ENCODE measurements at regions of chr2 and their contacts with region 1.

Region 1: DNA sequence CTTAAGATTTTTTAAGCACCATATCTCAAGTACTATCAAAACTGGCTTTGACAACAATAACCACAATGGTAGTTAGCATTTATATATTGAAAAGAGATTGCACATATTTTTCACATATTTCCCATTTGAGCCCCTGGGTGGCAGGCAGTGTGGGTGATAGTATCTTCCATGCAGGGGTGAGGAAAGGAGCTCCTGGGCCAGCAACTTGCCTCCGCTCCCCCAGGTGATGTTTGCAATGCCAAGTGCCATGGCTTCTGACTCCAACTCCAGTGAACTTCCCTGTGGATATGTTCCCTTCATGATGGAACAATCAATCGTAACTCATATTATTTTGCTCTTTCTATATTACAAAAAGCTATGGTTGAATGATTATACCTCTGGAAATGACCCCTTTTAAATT is 377.7 kb downstream of the PLCL1 start:
- DNase-seq: no peak

Region 2: DNA sequence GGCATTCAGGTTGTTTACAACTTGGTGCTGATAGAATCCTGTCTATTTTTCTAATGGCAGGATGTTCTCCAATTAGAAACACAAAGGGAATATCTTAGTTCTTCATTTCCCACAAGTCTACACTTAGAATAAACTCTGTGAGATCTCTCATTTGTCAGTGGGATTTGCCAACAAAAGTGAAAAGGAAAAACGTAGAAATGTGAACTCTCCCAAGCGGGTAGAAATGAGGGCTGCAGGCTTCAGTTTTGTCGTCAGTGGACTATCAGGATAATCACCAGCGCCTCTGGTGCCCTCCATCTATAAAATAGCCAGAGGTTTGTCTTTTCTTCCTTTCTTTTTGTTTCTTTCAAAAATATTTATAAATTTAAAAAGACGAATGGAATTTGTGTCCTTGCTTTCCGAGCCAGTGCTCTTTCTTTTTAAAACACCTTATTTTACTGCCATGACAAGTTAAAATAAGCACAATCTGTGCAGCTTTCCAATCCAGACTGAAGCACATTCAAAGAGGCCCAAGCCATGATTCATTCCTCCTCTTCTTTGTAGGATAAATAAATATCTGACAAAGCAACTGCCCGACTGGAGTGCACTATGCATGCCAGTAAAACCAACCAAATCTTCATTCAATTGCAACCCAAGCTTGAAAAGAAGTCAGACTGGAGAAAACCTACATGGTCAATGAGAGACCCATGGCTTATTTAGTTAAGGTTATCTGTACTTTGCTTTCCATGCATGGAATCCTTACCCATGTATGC is 1057.3 kb before region 1 on chr2:
- intact Hi-C with region 1: no loop called
- DNase-seq: no peak

Region 3: DNA sequence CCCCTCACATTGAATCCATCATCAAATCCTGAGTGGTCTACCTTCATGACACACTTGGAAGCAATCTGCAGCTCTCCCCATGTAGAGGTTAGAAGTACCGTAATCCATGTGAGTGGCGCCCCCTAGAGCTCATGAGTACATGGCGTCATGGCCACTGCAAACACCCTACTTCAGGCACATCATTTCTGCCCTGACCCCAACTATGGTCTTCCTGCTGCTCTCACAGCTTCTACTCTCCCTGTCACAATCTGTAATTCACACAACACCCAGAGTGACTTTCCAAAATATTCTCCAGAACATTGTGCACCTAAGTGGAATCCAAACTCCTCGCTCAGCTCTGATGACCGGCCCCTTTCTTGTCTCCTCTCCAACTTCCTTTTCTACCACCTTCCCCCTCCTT is 1013.4 kb before region 1 on chr2:
- intact Hi-C with region 1: no loop called
- DNase-seq: peak; percentile 80

Region 4: GRCh38 chr2:198137733-198138132 is 44.4 kb before region 1 on chr2:
- intact Hi-C with region 1: loop called in 1 of 2 experiments (anchors 2 kb)
- DNase-seq: no peak